Calu3 (cell line): ENCODE measurements at regions of chr2 and their contacts with region 1.

Region 1: DNA sequence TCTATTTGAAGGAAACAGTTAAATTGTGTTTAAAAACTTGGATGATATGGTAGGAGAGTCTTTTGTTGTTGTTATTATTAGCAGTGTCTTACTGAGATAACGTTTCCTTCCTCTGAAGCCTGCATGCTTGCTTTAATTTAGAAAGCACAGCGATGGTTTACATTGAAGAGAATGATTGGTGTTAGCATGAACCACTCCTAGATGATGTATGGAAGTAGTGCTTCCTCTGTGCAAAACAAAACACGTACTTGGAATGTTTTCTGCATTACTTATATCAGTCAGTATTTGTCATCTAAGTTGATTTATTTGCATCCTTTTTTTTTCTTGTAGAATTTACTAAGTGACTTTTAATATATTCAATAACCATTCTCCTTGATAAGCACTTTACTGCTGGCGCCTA is 89.0 kb downstream of the UGGT1 start:
- DNase-seq: no peak
- H3K4me3 Mint-ChIP-seq: no peak overlapping the region
- H3K27ac Mint-ChIP-seq: no peak overlapping the region
- H3K4me1 Mint-ChIP-seq: no peaks in the 10 kb centered on the region
- H3K27me3 Mint-ChIP-seq: no peaks in the 10 kb centered on the region
- CTCF ChIP-seq: no peak

Region 2: GRCh38 chr2:128313091-128313836 is 133.2 kb after region 1 on chr2:
- CTCF ChIA-PET with region 1: no interaction called
- intact Hi-C with region 1: loop called (anchors 5 kb)
- DNase-seq: peak; percentile 52
- H3K4me3 Mint-ChIP-seq: no peak overlapping the region
- H3K27ac Mint-ChIP-seq: no peak overlapping the region
- H3K4me1 Mint-ChIP-seq: peaks cover 16% of the 10 kb centered on the region
- H3K27me3 Mint-ChIP-seq: no peaks in the 10 kb centered on the region
- CTCF ChIP-seq: peak; percentile 55

Region 3: DNA sequence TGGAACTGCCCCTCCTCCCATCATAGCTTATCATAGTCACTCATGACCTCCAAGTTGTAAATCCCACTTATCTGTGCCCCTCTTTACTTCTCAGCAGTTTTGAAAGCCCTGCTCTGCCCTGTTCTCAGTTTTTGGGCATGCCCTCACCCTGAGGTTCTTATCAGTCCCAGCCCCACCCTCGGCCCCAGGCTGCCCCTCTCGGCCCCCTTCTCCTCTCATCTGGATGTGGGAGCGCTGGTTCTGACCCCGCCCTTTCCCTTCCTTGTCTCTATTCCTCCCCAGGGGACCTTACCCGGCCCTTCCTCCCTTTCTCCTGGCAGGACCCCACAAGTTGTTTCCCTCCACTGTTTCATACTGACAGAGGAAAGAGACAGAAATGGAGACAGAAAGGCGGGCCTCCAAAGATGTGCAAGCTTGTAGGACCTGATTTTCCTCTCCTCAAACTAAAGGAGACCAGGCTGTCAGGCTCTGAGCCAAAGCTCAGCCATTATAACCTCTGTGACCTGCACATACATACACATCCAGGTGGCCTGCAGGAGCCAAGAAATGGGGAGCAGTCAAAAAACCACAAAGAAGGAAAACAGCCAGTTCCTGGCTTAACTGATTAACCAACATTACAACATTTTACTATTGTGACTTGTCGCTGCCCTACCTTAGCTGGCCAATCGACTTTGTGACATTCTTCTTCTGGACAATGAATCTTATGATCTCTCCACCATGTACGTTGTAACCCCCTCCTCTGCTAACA is 309.7 kb after region 1 on chr2:
- CTCF ChIA-PET with region 1: no interaction called
- intact Hi-C with region 1: no loop called
- DNase-seq: peak; percentile 74
- H3K4me3 Mint-ChIP-seq: peak overlapping the region; percentile 57
- H3K27ac Mint-ChIP-seq: peak overlapping the region; percentile 91
- H3K4me1 Mint-ChIP-seq: peaks cover 48% of the 10 kb centered on the region
- H3K27me3 Mint-ChIP-seq: no peaks in the 10 kb centered on the region
- CTCF ChIP-seq: no peak